Activated CD4-positive, alpha-beta memory T cell treated with anti-CD3 and anti-CD28 coated beads for 36 hours (primary cell): ENCODE measurements at regions of chr3 and their contacts with region 1.

Region 1: GRCh38 chr3:105827959-105828358 is 40.9 kb downstream of the CBLB start:
- DNase-seq: peak; percentile 53
- H3K4me3 Mint-ChIP-seq: peak overlapping the region; percentile 27
- H3K27ac Mint-ChIP-seq: peak overlapping the region; percentile 100
- H3K4me1 Mint-ChIP-seq: peaks cover 87% of the 10 kb centered on the region
- H3K27me3 Mint-ChIP-seq: no peaks in the 10 kb centered on the region

Region 2: DNA sequence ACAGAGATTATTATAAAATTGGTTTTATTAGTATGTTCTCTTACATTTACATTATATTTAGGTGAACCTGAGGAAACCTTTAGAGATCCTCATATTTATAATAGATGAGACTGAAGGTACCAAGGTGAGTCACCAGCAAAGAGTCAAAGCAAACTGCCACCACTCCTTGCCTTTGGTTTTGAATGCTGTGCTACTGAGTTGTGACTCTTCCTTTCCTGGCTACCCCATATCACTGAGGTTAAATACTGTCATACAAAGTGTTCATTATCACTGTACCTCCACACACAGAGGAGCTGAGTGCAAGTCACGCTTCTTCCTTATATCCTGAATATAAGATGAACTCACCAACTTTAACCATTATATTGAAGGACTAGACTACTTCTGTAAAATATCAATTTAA is 127.4 kb before region 1 on chr3:
- CTCF ChIA-PET with region 1: no interaction called
- POLR2A ChIA-PET with region 1: no interaction called
- intact Hi-C with region 1: loop called (anchors 2 kb)
- DNase-seq: peak; percentile 50
- H3K4me3 Mint-ChIP-seq: no peak overlapping the region
- H3K27ac Mint-ChIP-seq: peak overlapping the region; percentile 55
- H3K4me1 Mint-ChIP-seq: peaks cover 30% of the 10 kb centered on the region
- H3K27me3 Mint-ChIP-seq: no peaks in the 10 kb centered on the region

Region 3: DNA sequence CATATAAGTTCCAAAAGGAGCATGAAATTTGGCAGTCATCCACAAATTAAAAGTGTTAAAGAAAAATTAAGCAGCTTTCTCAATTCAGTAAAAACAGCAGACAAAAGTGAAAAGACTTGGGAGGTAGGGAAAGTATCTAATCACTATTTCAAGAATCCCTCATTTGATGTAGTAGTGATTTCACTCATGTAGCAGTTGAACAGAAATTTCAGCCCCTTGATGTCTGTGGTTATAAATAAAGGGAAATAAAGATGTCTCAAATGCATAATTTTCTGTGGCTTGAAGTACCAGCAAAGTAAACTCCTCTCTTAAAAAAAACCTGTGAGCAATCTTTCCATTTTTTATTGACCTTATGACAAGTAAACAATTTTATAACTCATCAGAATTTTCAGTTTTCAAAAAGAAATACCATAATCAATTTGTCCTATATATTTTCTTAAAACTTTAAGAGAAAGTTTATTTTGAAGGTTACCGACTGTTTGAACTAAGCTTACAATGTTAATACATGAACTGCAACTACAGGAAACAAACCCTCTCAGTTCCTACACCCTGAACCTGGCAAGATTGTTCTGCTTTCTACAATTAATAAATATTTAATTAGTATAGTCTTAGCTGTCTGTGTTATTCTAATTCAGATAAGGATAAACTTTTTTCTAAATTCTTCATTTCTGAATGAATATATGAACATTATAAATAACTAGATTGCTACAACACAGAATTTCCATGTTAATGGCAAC is 53.3 kb before region 1 on chr3:
- CTCF ChIA-PET with region 1: interaction called, 3 read pairs
- POLR2A ChIA-PET with region 1: no interaction called
- intact Hi-C with region 1: loop called (anchors 1 kb)
- DNase-seq: no peak
- H3K4me3 Mint-ChIP-seq: no peak overlapping the region
- H3K27ac Mint-ChIP-seq: peak overlapping the region; percentile 49
- H3K4me1 Mint-ChIP-seq: peaks cover 71% of the 10 kb centered on the region
- H3K27me3 Mint-ChIP-seq: no peaks in the 10 kb centered on the region

Region 4: DNA sequence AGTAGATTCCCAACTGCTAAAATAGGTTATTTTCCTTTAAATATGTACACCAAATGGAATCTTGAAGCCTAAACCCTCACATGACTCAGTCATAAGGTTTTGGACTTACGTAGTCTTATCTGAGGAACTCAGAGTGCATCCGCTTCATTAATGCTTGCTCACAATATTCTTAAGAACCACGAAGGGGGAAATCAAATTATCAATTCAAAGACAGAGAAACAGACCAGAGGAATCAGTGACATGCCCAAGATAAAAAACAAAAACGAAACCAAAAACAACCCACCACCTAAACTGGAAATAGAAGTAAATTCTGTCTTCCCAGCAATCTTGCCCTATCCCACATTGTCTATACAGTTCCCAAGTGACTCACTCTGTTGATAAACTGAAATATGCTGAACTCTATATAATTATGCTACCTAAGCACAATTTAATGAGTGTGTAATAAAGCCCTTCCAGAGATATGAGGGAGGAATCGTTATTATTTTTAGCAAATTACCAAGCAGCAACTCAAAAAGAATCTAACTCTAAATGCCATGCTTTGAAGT is 176.2 kb after region 1 on chr3:
- CTCF ChIA-PET with region 1: no interaction called
- POLR2A ChIA-PET with region 1: no interaction called
- intact Hi-C with region 1: loop called (anchors 2 kb)
- DNase-seq: no peak
- H3K4me3 Mint-ChIP-seq: peak overlapping the region; percentile 8
- H3K27ac Mint-ChIP-seq: peak overlapping the region; percentile 9
- H3K4me1 Mint-ChIP-seq: peaks cover 24% of the 10 kb centered on the region
- H3K27me3 Mint-ChIP-seq: no peaks in the 10 kb centered on the region

Region 5: GRCh38 chr3:106176734-106177133 is 348.8 kb after region 1 on chr3:
- CTCF ChIA-PET with region 1: no interaction called
- POLR2A ChIA-PET with region 1: no interaction called
- intact Hi-C with region 1: loop called (anchors 2 kb)
- DNase-seq: peak; percentile 76
- H3K4me3 Mint-ChIP-seq: peak overlapping the region; percentile 51
- H3K27ac Mint-ChIP-seq: peak overlapping the region; percentile 87
- H3K4me1 Mint-ChIP-seq: peaks cover 58% of the 10 kb centered on the region
- H3K27me3 Mint-ChIP-seq: no peaks in the 10 kb centered on the region

Region 6: DNA sequence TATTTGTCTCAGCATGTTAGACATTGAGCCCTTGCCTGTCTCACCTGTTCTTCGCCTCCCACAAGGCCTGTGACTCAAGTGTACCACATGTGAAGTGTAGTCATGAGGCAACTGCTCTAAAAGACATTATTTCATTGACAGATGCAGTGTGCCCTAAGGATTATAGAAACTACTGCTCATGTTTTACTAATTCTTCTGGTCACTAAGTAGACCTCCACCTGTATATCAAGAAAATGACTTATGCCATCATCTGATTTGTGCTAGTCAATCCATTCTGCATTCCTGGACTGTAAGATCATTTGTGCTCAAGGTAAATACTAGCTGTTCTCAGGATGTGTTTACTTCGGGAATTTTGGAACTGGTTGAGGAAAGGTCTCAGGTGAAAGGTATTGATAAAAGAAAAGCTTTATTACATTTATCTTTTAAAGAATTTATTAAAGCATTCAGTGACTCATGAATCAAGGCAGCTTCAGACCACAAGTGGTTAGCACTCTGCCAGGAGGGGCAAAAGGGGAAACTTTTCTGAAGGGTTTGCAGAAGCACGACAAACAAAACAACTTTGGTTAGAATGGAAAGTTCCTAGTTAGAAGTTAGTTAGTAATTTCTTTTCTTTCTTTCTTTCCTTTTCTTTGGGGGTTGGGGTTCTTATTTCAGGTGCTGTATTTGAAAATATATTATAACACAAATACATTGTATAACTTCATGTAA is 506.1 kb after region 1 on chr3:
- CTCF ChIA-PET with region 1: no interaction called
- POLR2A ChIA-PET with region 1: interaction called, 4 read pairs
- intact Hi-C with region 1: loop called (anchors 1 kb)
- DNase-seq: peak; percentile 81
- H3K4me3 Mint-ChIP-seq: peak overlapping the region; percentile 49
- H3K27ac Mint-ChIP-seq: peak overlapping the region; percentile 87
- H3K4me1 Mint-ChIP-seq: peaks cover 80% of the 10 kb centered on the region
- H3K27me3 Mint-ChIP-seq: no peaks in the 10 kb centered on the region

Region 7: GRCh38 chr3:106609666-106610301 is 781.8 kb after region 1 on chr3:
- CTCF ChIA-PET with region 1: no interaction called
- POLR2A ChIA-PET with region 1: no interaction called
- intact Hi-C with region 1: loop called (anchors 5 kb)
- DNase-seq: peak; percentile 76
- H3K4me3 Mint-ChIP-seq: no peak overlapping the region
- H3K27ac Mint-ChIP-seq: peak overlapping the region; percentile 67
- H3K4me1 Mint-ChIP-seq: peaks cover 23% of the 10 kb centered on the region
- H3K27me3 Mint-ChIP-seq: no peaks in the 10 kb centered on the region